Activated naive CD4-positive, alpha-beta T cell treated with anti-CD3 and anti-CD28 coated beads for 36 hours (primary cell): ENCODE measurements at regions of chr3 and their contacts with region 1.

Region 1: DNA sequence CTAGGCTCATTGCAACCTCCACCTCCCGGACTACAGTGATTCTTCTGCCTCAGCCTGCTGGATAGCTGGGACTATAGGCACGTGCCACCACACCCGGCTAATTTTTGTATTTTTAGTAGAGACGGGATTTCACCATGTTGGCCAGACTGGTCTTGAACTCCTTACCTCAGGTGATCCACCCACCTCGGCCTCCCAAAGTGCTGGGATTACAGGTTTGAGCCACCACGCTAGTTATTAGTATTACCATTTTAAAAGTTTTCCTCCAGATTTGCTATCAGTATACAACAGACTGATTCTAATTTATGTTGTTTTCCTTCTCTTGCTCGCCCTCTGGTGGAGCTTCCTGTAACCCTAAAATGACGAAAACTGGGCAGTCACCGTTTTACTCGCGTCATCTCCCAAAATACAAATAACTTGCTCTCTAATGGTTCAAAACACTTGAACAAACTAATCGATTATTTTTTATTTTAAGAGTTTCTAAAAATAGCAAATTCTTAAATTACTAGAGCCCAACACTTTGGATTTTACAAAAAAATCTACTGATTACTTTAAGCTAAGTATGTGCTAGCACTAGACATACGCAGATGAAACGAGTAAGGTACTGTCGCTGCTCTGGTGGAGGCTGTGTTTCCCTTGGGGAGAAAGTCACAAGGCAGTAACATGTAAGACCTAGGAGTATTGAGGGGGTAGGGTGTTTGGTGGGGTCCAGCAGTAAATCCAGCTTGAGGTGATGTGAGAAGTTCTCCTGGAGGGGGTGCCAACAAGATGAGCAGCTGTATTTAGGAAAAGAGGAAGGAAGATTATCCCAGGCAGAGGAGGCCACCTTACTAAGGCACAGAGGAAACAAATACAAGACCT is 203.3 kb downstream of the MBNL1 start:
- DNase-seq: peak; percentile 91
- H3K4me3 Mint-ChIP-seq: peak overlapping the region; percentile 35
- H3K27ac Mint-ChIP-seq: peak overlapping the region; percentile 38
- H3K4me1 Mint-ChIP-seq: peaks cover 6% of the 10 kb centered on the region
- H3K27me3 Mint-ChIP-seq: no peaks in the 10 kb centered on the region

Region 2: GRCh38 chr3:151918253-151919029 is 553.6 kb before region 1 on chr3:
- CTCF ChIA-PET with region 1: no interaction called
- intact Hi-C with region 1: loop called (anchors 5 kb)
- DNase-seq: no peak
- H3K4me3 Mint-ChIP-seq: no peak overlapping the region
- H3K27ac Mint-ChIP-seq: no peak overlapping the region
- H3K4me1 Mint-ChIP-seq: no peaks in the 10 kb centered on the region
- H3K27me3 Mint-ChIP-seq: no peaks in the 10 kb centered on the region

Region 3: DNA sequence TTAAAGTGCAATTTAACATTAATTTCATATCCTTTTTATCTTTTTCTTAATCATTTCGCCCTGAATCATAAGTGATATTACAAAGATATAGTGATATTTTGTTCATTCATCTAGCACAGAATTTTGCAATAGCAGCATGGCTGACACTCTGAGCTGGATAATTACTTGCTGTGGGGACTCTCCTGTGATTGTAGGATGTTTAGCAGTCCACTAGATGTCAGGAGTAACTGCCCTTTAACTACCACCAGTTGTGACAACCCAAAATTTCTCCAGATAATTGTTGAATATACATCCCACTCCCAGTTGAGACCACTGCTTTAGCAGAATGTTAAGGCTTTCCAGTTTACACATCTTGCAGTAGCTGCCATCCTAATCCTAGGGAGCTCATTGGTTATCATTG is 400.1 kb before region 1 on chr3:
- CTCF ChIA-PET with region 1: interaction called, 25 read pairs
- intact Hi-C with region 1: loop called (anchors 1 kb)
- DNase-seq: peak; percentile 18
- H3K4me3 Mint-ChIP-seq: no peak overlapping the region
- H3K27ac Mint-ChIP-seq: no peak overlapping the region
- H3K4me1 Mint-ChIP-seq: peaks cover 3% of the 10 kb centered on the region
- H3K27me3 Mint-ChIP-seq: no peaks in the 10 kb centered on the region

Region 4: DNA sequence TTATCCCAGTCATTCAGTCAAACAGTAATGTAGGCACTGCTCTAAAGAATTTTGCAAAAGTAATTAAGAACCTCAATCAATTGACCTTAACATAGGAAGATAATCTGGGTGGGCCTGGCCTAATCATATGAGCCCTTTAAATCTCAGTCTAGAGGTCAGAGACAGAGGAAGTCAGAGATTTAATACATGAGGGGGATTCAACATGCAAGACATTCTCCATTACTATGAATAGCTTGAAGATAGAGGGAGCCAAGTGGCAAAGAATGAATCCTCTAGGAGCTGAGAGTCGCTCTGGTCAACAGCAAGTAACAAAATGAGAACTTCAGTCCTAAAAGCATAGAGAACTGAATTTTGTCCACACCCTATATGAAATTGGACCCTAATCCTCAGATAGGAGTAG is 242.4 kb before region 1 on chr3:
- CTCF ChIA-PET with region 1: no interaction called
- intact Hi-C with region 1: loop called (anchors 1 kb)
- DNase-seq: no peak
- H3K4me3 Mint-ChIP-seq: no peak overlapping the region
- H3K27ac Mint-ChIP-seq: no peak overlapping the region
- H3K4me1 Mint-ChIP-seq: peaks cover 79% of the 10 kb centered on the region
- H3K27me3 Mint-ChIP-seq: no peaks in the 10 kb centered on the region

Region 5: DNA sequence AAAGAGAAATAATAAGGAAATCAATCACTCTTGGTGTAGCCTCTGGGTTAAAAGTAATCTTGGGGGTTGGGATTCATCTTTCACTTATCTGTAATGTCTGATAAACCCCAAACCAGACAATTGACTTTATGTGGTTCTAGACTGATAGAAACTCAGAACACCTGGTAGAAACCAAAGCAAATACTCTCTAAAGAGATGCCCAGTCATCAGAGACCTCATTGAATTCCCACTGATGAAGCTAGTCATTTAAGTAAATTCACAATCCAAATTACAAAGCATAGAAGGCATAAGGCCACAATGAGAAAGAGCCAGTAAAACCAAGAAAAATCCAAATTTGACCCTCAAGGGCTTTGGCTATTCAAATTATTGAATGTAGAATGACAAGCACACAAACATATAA is 47.3 kb after region 1 on chr3:
- CTCF ChIA-PET with region 1: interaction called, 19 read pairs
- intact Hi-C with region 1: loop called (anchors 1 kb)
- DNase-seq: no peak
- H3K4me3 Mint-ChIP-seq: no peak overlapping the region
- H3K27ac Mint-ChIP-seq: no peak overlapping the region
- H3K4me1 Mint-ChIP-seq: no peaks in the 10 kb centered on the region
- H3K27me3 Mint-ChIP-seq: no peaks in the 10 kb centered on the region

Region 6: DNA sequence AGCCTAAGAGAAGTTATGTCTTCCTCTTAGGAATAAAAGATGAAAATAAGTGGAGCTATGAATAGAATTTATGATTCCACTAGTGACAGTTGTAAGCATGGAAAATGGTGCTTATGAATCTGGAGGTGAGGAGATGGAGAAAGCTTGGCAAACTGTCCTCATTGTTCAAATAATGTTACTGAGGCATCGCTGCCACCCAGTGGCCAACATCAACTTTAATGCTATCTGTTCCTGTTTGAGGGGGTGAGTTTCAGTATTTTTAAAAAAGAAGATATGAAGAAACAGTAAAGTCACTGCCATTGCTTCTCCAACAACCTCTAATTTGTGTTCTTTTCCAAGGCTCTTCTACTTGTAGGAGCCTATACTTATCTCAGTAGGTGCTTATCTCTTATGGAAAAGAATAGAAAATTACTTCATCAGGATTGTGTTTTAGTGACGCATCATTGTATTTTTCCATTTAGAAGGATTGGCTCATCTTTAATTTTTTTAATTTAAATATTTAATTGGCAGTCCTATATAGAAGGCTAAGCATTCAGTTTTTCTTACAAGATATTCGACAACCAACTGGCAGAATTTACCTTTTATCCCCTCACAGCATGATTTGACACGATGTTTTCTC is 102.5 kb after region 1 on chr3:
- CTCF ChIA-PET with region 1: interaction called, 14 read pairs
- intact Hi-C with region 1: loop called (anchors 1 kb)
- DNase-seq: peak; percentile 68
- H3K4me3 Mint-ChIP-seq: no peak overlapping the region
- H3K27ac Mint-ChIP-seq: no peak overlapping the region
- H3K4me1 Mint-ChIP-seq: no peaks in the 10 kb centered on the region
- H3K27me3 Mint-ChIP-seq: no peaks in the 10 kb centered on the region

Region 7: DNA sequence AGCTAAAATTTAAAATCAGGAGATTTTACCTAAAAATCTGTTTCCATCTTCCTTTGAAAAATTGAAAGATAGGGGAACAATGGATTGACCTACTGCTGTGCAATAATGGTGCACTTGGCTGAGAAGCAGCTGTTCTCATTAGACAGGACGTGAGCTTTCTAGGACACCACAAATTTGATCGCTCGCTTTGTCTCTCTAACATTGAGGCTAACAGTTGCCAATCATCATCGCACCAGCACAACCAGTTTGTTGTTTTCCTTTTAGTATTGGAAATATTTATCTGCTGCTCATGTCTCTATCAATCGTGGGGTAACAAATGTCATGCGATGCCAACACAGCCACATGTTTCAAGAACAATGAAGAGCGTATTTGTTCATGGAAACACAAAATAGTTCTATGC is 134.1 kb after region 1 on chr3:
- CTCF ChIA-PET with region 1: no interaction called
- intact Hi-C with region 1: no loop called
- DNase-seq: no peak
- H3K4me3 Mint-ChIP-seq: no peak overlapping the region
- H3K27ac Mint-ChIP-seq: no peak overlapping the region
- H3K4me1 Mint-ChIP-seq: no peaks in the 10 kb centered on the region
- H3K27me3 Mint-ChIP-seq: peaks cover 1% of the 10 kb centered on the region